ENCODE measurements at regions of chr5 and their contacts with region 1.

Region 1: GRCh38 chr5:44246986-44247385 is 142.2 kb downstream of the FGF10 start:
- DNase-seq: no peak

Region 2: GRCh38 chr5:44332285-44332971 is 85.4 kb after region 1 on chr5:
- CTCF ChIA-PET with region 1: no interaction called
- POLR2A ChIA-PET with region 1: no interaction called
- DNase-seq: peak; percentile 10

Region 3: GRCh38 chr5:44361342-44362002 is 114.5 kb after region 1 on chr5:
- CTCF ChIA-PET with region 1: interaction called, 12 read pairs
- POLR2A ChIA-PET with region 1: no interaction called
- DNase-seq: no peak